Kidney (tissue), 22 donors: ENCODE measurements at regions of chr2 and their contacts with region 1.

Region 1: DNA sequence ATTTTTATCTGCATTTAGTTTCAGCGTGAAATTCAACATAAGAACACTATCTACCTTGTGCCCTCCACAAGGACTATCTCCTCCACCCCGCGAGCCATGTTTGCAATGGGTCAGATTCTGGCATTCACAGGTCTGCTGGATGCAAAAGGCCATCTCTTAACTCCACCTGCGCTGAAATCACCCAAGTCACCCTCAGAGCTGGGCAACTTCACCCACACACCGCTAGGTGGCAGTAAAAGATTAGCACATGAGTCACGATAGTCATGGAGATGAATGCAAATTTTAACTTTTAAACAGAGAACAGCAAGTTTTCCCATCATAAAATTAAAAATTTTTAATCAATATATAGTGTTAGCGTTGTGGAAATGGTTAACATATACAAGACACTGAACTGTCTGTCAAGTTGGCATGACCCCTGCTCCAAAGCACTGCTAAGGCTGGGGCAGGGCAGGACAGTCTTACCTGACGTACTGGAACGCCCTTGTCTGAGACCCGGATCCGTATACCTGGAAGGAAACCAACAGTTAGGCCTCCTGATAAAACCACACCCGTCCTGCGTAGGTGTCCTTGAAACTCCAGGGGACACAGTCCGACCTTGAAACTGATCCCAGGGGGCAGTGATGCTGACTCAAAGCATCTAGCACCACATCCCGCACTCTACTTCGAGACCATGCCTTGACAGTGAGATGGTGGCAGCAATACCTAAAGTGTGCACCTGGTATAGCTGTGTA is 89.6 kb downstream of the UXS1 start:
- DNase-seq: peak in 4 of 5 donors; percentile 70 to 86 (median 78)
- H3K4me3 ChIP-seq: no peak overlapping the region
- H3K27ac ChIP-seq: no peak overlapping the region
- H3K4me1 ChIP-seq: no peaks in the 10 kb centered on the region
- H3K27me3 ChIP-seq: no peaks in the 10 kb centered on the region
- CTCF ChIP-seq: peak; percentile 97

Region 2: DNA sequence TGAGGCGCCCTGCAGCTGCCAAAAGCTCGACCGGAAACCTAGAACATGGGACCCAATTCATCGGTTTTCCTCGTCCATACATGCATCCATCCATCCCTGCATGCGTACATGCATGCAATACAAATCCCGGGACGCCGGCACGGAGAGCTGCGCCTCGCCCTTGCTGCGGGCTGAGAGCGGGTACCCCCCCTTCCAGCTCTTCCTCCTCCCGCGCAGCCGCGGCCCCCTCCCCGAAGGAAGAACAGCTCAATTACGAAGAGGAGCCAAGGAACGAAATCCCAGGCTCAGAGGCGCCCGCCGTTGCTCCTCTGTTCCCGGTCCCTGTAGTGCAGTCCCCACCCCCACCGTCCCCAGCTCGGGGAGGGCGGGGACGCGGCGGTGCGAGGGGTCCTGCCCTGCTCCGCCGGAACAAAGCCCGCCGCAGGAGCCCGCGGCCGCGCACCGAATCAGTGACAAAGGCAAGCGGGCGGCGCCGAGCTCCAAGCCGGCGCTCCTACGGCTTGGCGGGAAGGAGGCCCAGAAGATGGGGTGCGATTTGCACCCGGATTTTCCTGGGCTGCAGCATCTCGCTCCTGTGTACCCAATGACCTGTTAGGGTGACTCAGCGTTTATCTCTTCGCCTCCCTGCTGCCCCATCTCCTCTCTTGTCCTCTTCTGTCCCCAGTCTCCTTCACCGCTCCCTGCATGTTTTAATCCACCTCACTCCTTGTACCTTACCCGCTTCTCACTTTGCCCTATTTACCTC is 1259.5 kb before region 1 on chr2:
- intact Hi-C with region 1: no loop called
- DNase-seq: peak; percentile 61 to 81 (median 71)
- H3K4me3 ChIP-seq: peak overlapping the region; percentile 62 to 70 (median 65)
- H3K27ac ChIP-seq: peak overlapping the region; percentile 93
- H3K4me1 ChIP-seq: peaks cover 0 to 2% (median 0%) of the 10 kb centered on the region in 3 donors
- H3K27me3 ChIP-seq: peaks cover 50% of the 10 kb centered on the region
- CTCF ChIP-seq: no peak

Region 3: GRCh38 chr2:106582148-106583143 is 477.9 kb after region 1 on chr2:
- intact Hi-C with region 1: loop called (anchors 10 kb)
- DNase-seq: peak; percentile 83 to 95 (median 85)
- H3K4me3 ChIP-seq: peak overlapping the region; percentile 50 to 71 (median 67)
- H3K27ac ChIP-seq: peak overlapping the region in 1 of 2 donors; percentile 9
- H3K4me1 ChIP-seq: peaks cover 0 to 6% (median 0%) of the 10 kb centered on the region in 3 donors
- H3K27me3 ChIP-seq: peaks cover 2% of the 10 kb centered on the region
- CTCF ChIP-seq: peak; percentile 88